ENCODE measurements at regions of chr9 and their contacts with region 1.

Region 1: DNA sequence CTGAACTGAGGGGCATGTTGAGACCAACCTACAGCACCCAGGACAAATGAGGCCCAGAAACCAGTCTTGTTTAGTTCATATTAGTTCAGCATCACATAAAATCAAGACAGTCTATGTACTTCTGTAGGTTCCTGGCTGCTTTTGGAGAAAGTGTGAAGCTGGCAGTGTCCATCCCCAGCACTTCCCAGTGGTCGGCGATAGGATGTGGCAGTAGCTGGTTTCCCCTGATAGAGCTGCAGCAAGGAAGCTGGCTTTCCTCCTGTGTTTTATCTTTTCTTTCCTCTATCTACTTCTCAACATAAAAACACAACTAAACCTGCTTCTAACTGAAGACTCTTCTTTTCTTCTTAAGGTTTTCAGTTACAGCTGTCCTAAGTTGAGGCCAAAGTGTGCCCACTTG is 43.0 kb upstream of the SLC46A2 start:
- DNase-seq: no peak
- H3K4me3 ChIP-seq: no peak overlapping the region
- H3K27ac ChIP-seq: no peak overlapping the region
- H3K4me1 ChIP-seq: no peaks in the 10 kb centered on the region
- H3K27me3 ChIP-seq: peaks cover 0 to 10% (median 0%) of the 10 kb centered on the region in 4 experiments; a peak in 2 of 7 replicates
- CTCF ChIP-seq: no peak
- EP300 ChIP-seq: no peak
- POLR2A ChIP-seq: no peak
- RAD21 ChIP-seq: no peak

Region 2: DNA sequence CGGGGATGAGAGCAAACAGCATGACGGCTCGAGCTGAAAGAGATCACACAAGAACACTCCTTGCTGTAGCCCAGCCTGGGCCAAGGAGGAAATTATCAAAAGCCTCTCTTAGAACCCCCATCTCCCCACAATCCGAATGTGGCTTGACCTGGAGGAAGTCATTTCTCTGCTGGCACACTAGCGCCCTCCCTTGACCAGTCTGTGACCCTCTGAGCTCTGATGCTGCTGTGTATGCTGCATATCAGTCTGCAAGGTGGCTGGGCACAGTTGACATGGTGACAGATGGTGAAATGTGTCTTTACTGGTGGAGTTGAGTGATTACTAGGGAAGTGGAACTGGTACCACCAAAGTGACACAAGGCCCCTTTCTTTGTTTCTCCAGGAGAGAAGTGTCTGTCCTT is 46.3 kb before region 1 on chr9:
- CTCF ChIA-PET with region 1: no interaction called
- POLR2A ChIA-PET with region 1: no interaction called
- DNase-seq: peak; percentile 34 to 85
- H3K4me3 ChIP-seq: no peak overlapping the region
- H3K27ac ChIP-seq: no peak overlapping the region
- H3K4me1 ChIP-seq: peaks cover 0 to 8% (median 4%) of the 10 kb centered on the region in 4 experiments; a peak in 4 of 7 replicates
- H3K27me3 ChIP-seq: peaks cover 14 to 34% (median 28%) of the 10 kb centered on the region in 4 experiments
- CTCF ChIP-seq: peak; percentile 91 to 97 (median 96)
- EP300 ChIP-seq: no peak
- POLR2A ChIP-seq: no peak
- RAD21 ChIP-seq: peak; percentile 88 to 91

Region 3: DNA sequence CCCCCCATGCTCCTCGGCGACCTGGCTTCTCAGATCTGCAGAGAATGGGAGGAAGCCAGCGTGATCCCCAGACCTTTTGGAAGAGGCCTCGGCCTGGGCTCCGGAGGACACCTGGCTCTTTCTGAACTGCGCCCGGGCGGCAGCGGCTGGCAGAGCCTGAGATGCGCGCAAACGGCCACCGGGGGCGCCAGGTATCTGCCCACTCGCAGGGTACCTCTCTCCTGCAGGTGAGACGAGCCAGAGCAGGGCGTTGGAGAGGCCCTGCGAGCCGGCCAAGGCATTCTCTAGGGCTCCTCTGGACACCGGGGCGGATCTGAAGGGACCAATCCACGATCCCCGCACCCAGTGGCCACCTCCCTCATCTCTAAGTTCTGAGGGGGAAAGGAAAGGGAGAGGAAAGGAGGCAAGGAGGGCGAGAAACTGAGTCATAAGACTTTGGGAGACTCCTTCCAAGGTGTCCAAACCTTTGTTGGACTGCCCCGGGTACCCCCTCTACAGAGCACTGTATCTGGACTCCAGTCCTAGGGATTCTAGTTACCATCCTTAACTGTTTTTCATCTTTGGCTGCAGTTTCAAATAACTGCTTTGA is 12.0 kb after region 1 on chr9:
- CTCF ChIA-PET with region 1: interaction called, 21 read pairs
- POLR2A ChIA-PET with region 1: interaction called, 3 read pairs
- DNase-seq: peak; percentile 41 to 94
- H3K4me3 ChIP-seq: no peak overlapping the region
- H3K27ac ChIP-seq: no peak overlapping the region
- H3K4me1 ChIP-seq: no peaks in the 10 kb centered on the region
- H3K27me3 ChIP-seq: peaks cover 0 to 3% (median under 1%) of the 10 kb centered on the region in 4 experiments; a peak in 3 of 7 replicates
- CTCF ChIP-seq: peak; percentile 90 to 98 (median 91)
- EP300 ChIP-seq: no peak
- POLR2A ChIP-seq: no peak
- RAD21 ChIP-seq: peak; percentile 61 to 71

Region 4: GRCh38 chr9:113056191-113057106 is 122.8 kb after region 1 on chr9 and contains the start of gene ZFP37:
- CTCF ChIA-PET with region 1: no interaction called
- POLR2A ChIA-PET with region 1: no interaction called
- DNase-seq: peak; percentile 76 to 92
- H3K4me3 ChIP-seq: peak within 1 kb of the TSS; percentile 92 to 99 (median 96)
- H3K27ac ChIP-seq: no peak within 1 kb of the TSS
- H3K4me1 ChIP-seq: no peaks in the 10 kb centered on the region; a peak in 2 of 7 replicates
- H3K27me3 ChIP-seq: peaks cover 23 to 33% (median 31%) of the 10 kb centered on the region in 4 experiments
- CTCF ChIP-seq: no peak
- EP300 ChIP-seq: no peak
- POLR2A ChIP-seq: peak in 1 of 2 experiments; percentile 70; a peak in 2 of 3 replicates
- RAD21 ChIP-seq: no peak
- total RNA-seq, gene ZFP37: 4.4 and 5.1 TPM in 2 replicates

Measured in H1 (cell line).